Aorta (tissue), 5 donors: ENCODE measurements at regions of chr10 and their contacts with region 1.

Region 1: GRCh38 chr10:110225756-110226542 is 18.5 kb downstream of the MXI1 start:
- DNase-seq: peak; percentile 95 to 96
- ATAC-seq: peak; percentile 88
- H3K4me3 ChIP-seq: peak overlapping the region; percentile 54 to 91
- H3K27ac ChIP-seq: peak overlapping the region; percentile 15 to 78
- H3K4me1 ChIP-seq: peaks cover 4% of the 10 kb centered on the region in 2 donors
- H3K27me3 ChIP-seq: no peaks in the 10 kb centered on the region

Region 2: GRCh38 chr10:109883859-109884771 is 341.8 kb before region 1 on chr10:
- intact Hi-C with region 1: loop called (anchors 5 to 10 kb)
- DNase-seq: peak; percentile 71 to 82
- ATAC-seq: peak; percentile 94
- H3K4me3 ChIP-seq: no peak overlapping the region
- H3K27ac ChIP-seq: peak overlapping the region in 1 of 2 donors; percentile 0
- H3K4me1 ChIP-seq: no peaks in the 10 kb centered on the region
- H3K27me3 ChIP-seq: no peaks in the 10 kb centered on the region

Region 3: GRCh38 chr10:110007701-110008517 is 218.0 kb before region 1 on chr10 and contains the start of gene ADD3:
- intact Hi-C with region 1: loop called in 1 of 2 experiments (anchors 10 kb)
- DNase-seq: peak; percentile 96 to 98
- ATAC-seq: peak; percentile 96
- H3K4me3 ChIP-seq: peak within 1 kb of the TSS; percentile 76 to 88
- H3K27ac ChIP-seq: peak within 1 kb of the TSS; percentile 50 to 96
- H3K4me1 ChIP-seq: peaks cover 0 to 6% of the 10 kb centered on the region in 2 donors
- H3K27me3 ChIP-seq: no peaks in the 10 kb centered on the region
- total RNA-seq, gene ADD3: 80.9 to 197 TPM

Region 4: GRCh38 chr10:110210674-110211464 is 15.1 kb before region 1 on chr10:
- intact Hi-C with region 1: loop called (anchors 1 kb)
- DNase-seq: peak; percentile 97 to 99
- ATAC-seq: peak; percentile 90
- H3K4me3 ChIP-seq: peak overlapping the region; percentile 63 to 84
- H3K27ac ChIP-seq: peak overlapping the region; percentile 86 to 91
- H3K4me1 ChIP-seq: peaks cover 2 to 5% of the 10 kb centered on the region in 2 donors
- H3K27me3 ChIP-seq: no peaks in the 10 kb centered on the region

Region 5: GRCh38 chr10:110273474-110273873 is 47.5 kb after region 1 on chr10:
- intact Hi-C with region 1: loop called (anchors 5 kb)
- DNase-seq: peak; percentile 71 to 81
- ATAC-seq: peak; percentile 47
- H3K4me3 ChIP-seq: no peak overlapping the region
- H3K27ac ChIP-seq: peak overlapping the region; percentile 67 to 86
- H3K4me1 ChIP-seq: peaks cover 1 to 20% of the 10 kb centered on the region in 2 donors
- H3K27me3 ChIP-seq: no peaks in the 10 kb centered on the region

Region 6: GRCh38 chr10:110279407-110279986 is 53.5 kb after region 1 on chr10:
- intact Hi-C with region 1: loop called (anchors 5 kb)
- DNase-seq: peak in 1 of 2 donors; percentile 59
- ATAC-seq: peak; percentile 88
- H3K4me3 ChIP-seq: no peak overlapping the region
- H3K27ac ChIP-seq: no peak overlapping the region
- H3K4me1 ChIP-seq: peaks cover 3 to 9% of the 10 kb centered on the region in 2 donors
- H3K27me3 ChIP-seq: no peaks in the 10 kb centered on the region